A673 (cell line): ENCODE measurements at regions of chr7 and their contacts with region 1.

Region 1: DNA sequence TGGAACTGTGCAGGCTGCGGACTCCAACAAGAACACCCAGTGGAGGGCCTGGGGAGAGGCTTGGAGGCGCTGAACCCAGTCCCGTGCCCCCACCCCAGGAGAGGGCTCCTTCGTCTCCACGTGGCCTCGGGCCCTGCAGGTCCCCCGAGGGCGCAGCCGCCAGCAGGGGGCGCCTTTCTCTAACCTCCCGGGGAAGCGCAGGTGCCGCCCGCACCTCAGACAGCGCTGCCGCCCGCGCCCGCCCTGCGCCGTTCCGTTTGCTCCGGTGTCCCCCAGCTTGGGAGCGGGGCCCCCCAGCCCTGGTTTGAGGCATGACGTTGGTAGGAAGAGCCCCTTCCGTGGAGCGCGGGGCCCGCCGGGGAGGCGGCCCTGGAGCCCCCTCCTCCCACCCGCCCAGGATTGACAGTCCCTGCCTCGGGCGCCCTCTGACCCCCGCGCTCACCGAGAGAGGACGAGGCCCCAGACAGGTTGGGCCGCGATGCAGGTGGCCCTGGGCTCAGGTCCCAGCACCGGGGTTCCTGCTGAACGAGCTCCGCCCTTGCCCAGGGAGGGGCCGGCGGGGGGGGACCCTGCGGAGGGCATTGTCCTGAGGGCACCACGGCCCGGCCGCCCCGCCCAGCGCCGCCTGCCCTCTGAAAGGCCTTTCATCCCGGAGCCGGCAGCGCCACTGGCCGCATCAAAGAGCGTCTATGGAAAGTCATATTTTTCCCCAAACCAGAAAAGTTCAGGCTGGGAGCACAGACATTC is 42.8 kb downstream of the FOXL3 start:
- DNase-seq: peak; percentile 83
- H3K4me3 ChIP-seq: peak overlapping the region; percentile 50
- H3K27ac ChIP-seq: peak overlapping the region; percentile 49
- H3K4me1 ChIP-seq: peaks cover 6% of the 10 kb centered on the region
- H3K27me3 ChIP-seq: no peaks in the 10 kb centered on the region
- CTCF ChIP-seq: peak; percentile 90

Region 2: DNA sequence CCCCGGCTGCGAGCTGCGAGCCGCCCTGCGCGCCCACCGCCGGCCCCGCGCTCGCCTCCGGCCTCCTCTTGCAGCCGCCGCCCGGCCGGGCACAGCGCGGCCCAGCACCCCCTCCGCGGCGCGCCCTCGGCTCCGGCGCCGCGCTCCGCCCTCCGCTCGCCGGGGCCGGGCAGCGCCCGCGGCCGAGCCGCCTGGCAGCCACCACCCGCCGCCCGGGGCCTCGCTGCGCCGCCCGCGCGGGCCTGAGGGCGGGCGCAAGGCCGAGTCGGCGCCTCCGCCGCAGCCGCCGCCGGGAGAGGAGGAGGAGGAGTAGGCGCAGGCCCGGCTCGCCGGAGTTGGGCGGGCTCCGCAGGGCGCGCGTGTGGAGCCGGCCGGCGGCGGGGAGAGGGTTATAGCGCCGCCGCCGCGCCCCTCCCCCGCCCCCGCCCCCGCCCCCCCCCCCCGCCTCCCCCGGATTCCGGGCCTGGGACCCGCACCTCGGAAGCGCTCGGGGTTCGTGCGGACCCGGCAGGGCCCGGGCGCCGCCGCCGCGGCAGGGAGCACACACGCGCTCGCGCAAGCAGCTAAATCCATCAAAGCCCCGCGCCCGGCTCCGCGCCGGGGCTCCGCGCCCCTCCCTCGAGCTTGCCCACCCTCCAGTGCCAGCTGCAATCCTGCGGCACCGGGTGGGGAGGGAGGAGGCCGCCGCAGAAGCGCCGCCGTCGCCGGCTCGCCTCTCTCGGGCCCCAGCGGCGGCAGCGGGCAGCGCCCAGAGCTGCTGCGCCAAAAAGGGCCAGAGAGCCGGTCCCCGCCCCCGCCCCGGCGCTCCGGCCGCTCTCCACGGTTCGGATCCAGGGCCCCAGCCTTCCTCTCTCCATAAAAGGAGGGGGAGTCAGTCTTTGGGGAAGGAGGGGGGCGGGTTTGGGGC is 186.9 kb after region 1 on chr7 and contains the start of gene PDGFA:
- CTCF ChIA-PET with region 1: no interaction called
- POLR2A ChIA-PET with region 1: no interaction called
- intact Hi-C with region 1: loop called (anchors 10 kb)
- DNase-seq: peak; percentile 56
- H3K4me3 ChIP-seq: peak within 1 kb of the TSS; percentile 56
- H3K27ac ChIP-seq: no peak within 1 kb of the TSS
- H3K4me1 ChIP-seq: peaks cover 20% of the 10 kb centered on the region
- H3K27me3 ChIP-seq: peaks cover 70% of the 10 kb centered on the region
- CTCF ChIP-seq: no peak
- total RNA-seq, gene PDGFA: 2.1 and 4.3 TPM in 2 replicates

Region 3: DNA sequence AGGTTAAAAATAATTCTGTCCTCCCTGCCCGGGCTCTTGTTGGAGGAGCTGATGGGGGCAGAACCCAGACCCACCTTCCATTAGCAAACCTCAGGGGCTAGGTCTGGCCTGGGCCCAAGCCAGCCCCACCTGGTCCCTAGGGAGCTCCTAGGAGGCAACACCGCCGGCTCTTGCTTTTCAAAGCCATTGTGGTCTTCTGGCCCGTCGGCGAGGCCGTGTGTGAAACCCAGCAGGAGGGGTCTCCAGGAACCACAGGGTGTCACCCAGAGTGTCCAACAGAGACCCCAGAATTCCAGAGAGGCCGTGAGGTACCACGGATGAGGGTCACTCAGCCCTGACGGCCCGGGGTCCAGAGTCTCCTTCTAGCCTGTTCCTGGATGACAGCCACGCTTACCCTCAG is 203.4 kb after region 1 on chr7:
- CTCF ChIA-PET with region 1: no interaction called
- POLR2A ChIA-PET with region 1: no interaction called
- intact Hi-C with region 1: no loop called
- DNase-seq: no peak
- H3K4me3 ChIP-seq: no peak overlapping the region
- H3K27ac ChIP-seq: no peak overlapping the region
- H3K4me1 ChIP-seq: no peaks in the 10 kb centered on the region
- H3K27me3 ChIP-seq: no peaks in the 10 kb centered on the region
- CTCF ChIP-seq: no peak

Region 4: DNA sequence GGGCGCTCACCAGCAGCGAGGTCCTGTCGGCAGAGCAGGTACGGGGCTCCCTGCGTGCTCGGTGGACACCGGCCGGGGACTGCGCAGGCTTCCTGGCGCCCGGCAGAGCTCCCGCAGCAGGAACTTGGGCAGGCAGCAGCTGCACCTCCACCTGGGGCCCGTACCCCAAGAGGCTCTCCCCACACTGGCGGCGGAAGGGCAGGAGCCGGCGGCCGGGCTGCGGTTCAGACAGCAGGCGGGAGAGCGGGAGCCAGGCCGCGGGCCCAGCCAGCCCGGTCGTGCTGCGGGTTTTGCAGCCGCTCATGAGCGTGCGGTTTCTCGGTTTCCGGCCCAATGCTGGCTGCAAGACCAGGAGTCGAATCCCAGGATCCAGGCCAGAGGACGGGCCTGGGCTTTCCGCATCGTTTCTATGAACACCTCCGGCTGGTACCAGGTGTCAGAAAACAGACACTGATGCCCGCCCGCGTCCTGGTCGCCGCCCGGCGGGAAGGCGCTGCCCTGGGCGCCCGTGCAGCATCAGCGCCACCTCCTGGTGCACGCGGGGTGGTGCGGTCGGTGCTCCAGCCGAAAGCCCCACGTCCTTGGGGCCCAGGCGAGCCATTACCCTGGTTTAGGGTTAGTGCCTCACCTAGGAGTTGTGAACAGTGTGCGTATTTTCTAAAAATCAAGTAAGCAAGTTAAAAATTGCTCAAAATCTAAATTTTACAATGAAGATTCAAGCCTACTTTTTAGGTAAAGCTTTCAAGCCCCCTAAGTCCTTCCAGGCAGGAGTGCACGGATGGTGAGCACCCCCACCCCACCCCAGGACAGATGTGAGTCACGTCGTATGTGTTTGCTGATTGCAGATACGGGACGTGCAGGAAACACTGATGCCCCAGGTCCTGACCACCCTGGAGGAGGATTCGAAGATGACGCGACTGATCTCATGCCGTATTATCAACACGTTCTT is 441.6 kb after region 1 on chr7:
- CTCF ChIA-PET with region 1: no interaction called
- POLR2A ChIA-PET with region 1: no interaction called
- intact Hi-C with region 1: loop called (anchors 2 kb)
- DNase-seq: peak; percentile 69
- H3K4me3 ChIP-seq: no peak overlapping the region
- H3K27ac ChIP-seq: no peak overlapping the region
- H3K4me1 ChIP-seq: peaks cover 51% of the 10 kb centered on the region
- H3K27me3 ChIP-seq: no peaks in the 10 kb centered on the region
- CTCF ChIP-seq: peak; percentile 93